Ascending aorta (tissue), 2 donors: ENCODE measurements at regions of chr10 and their contacts with region 1.

Region 1: GRCh38 chr10:91579329-91579985 is 53.4 kb downstream of the PPP1R3C start:
- DNase-seq: no peak
- H3K4me3 ChIP-seq: no peak overlapping the region
- H3K27ac ChIP-seq: peak overlapping the region; percentile 74 to 75
- H3K4me1 ChIP-seq: peaks cover 0 to 21% of the 10 kb centered on the region in 2 donors
- H3K27me3 ChIP-seq: no peaks in the 10 kb centered on the region
- CTCF ChIP-seq: no peak

Region 2: GRCh38 chr10:91511549-91512330 is 67.7 kb before region 1 on chr10:
- intact Hi-C with region 1: loop called (anchors 5 kb)
- DNase-seq: no peak
- H3K4me3 ChIP-seq: no peak overlapping the region
- H3K27ac ChIP-seq: no peak overlapping the region
- H3K4me1 ChIP-seq: peaks cover 0 to 2% of the 10 kb centered on the region in 2 donors
- H3K27me3 ChIP-seq: no peaks in the 10 kb centered on the region
- CTCF ChIP-seq: no peak

Region 3: GRCh38 chr10:91525896-91526712 is 53.4 kb before region 1 on chr10:
- intact Hi-C with region 1: loop called (anchors 5 kb)
- DNase-seq: no peak
- H3K4me3 ChIP-seq: no peak overlapping the region
- H3K27ac ChIP-seq: no peak overlapping the region
- H3K4me1 ChIP-seq: peaks cover 0 to 6% of the 10 kb centered on the region in 2 donors
- H3K27me3 ChIP-seq: no peaks in the 10 kb centered on the region
- CTCF ChIP-seq: no peak

Region 4: DNA sequence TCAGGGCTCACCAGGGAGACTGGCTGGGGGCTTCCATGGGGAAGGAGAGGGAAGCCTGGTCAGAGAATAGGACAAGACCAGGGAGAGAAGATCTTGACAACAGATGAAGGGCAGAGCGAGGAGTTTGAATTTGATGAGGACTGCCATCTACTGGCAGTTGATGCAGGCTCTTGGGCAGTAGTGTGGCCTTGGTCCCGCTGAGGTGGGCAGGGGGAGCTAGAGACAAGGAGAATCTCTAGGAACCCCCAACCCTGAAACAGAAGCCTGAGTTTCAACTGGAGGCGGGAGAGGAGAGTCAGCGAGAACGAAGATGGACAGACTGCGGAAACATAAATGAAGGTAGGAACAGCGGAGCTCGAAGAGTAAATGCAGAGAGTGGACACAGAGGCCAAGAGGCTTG is 27.6 kb before region 1 on chr10:
- intact Hi-C with region 1: no loop called
- DNase-seq: no peak
- H3K4me3 ChIP-seq: no peak overlapping the region
- H3K27ac ChIP-seq: no peak overlapping the region
- H3K4me1 ChIP-seq: peaks cover 0 to 3% of the 10 kb centered on the region in 2 donors
- H3K27me3 ChIP-seq: no peaks in the 10 kb centered on the region
- CTCF ChIP-seq: peak; percentile 18 to 45 (median 22)